ENCODE measurements at regions of chr19 and their contacts with region 1.

Region 1: DNA sequence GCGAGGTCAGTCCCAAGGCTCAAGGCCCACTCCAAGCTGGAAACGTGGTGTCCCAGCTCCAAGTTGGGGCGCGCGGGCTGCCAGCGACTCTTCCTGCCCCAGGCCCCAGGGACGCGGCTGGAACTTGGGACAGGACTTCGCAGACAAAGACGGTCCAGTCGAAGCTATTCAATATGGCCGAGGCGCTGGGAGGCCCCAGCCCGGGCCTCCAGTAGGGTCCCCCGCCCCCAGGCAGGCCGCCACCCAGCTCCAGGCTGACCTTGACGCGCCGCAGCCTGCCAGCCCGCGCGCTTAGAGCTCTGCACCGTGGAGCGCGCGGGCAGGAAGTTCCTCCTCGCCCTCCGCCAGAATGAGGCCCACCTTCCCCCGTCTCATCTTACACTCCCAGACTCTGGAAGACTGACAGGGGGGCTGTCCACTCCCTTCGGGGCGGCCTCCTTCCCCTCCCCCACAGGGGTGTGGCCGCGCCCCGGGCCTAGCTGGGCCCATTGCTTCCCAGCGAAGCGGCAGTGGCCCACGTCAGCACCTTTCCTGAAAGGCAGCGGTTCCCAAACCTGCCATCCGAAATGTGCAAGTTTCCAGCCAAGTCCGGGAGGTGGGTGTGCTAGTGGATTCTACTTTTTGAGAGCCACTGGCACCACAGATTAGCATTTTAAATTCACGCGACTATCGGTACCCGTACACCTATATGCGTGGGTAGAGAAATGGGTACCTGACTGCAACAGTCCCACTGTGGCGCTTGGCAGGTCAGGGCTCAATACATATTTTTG is at the start of gene CCDC8:
- DNase-seq: peak; percentile 86 to 91
- H3K4me3 ChIP-seq: peak within 1 kb of the TSS; percentile 57 to 88 (median 74)
- H3K27ac ChIP-seq: peak within 1 kb of the TSS; percentile 13; the same call in 1 of the 2 replicates
- H3K4me1 ChIP-seq: peaks cover 3 to 13% (median 10%) of the 10 kb centered on the region in 4 experiments
- H3K27me3 ChIP-seq: peaks cover 0 to 16% (median 7%) of the 10 kb centered on the region in 4 experiments; a peak in 4 of 7 replicates
- CTCF ChIP-seq: no peak
- EP300 ChIP-seq: no peak
- POLR2A ChIP-seq: peak in 1 of 2 experiments; percentile 73; a peak in 2 of 3 replicates
- RAD21 ChIP-seq: no peak
- total RNA-seq, gene CCDC8: 13.6 and 15.1 TPM in 2 replicates

Region 2: DNA sequence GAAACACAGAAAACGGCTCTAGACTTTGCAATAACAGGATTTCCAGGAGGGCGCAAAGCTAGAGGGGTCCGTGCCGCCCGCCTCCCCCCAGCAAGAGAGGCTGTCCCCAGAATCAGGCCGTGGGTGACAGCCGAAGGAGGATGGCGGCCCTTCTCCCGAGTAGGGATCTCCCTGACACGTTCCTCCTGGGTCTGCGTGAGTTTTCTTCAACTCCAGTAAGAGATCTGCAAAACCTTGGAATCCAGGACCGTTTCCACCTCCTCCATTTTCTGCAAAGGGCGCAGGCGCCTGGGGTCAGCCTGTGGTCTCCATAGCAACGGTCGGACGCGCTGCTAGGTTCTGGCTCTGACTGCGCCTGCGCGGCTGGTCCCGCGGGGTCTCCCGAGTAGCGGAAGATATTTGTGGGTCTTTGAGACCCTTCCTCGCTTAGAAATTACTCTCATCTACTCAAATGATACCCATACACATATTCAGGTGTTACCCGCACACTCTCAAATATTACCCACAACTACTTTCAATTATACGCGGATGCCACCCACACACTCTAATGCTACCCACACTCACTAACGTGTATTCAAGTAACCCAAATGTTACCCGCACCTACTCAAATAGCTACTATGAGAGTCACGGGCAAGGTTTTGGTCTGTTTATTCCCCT is 13.2 kb after region 1 on chr19:
- CTCF ChIA-PET with region 1: interaction called, 10 read pairs
- POLR2A ChIA-PET with region 1: interaction called, 13 read pairs
- DNase-seq: peak in 1 of 2 experiments; percentile 91
- H3K4me3 ChIP-seq: peak overlapping the region; percentile 69 to 84 (median 78)
- H3K27ac ChIP-seq: no peak overlapping the region
- H3K4me1 ChIP-seq: peaks cover 3 to 6% (median 5%) of the 10 kb centered on the region in 4 experiments; a peak in 6 of 7 replicates
- H3K27me3 ChIP-seq: peaks cover 0 to 20% (median 15%) of the 10 kb centered on the region in 4 experiments; a peak in 5 of 7 replicates
- CTCF ChIP-seq: no peak
- EP300 ChIP-seq: no peak
- POLR2A ChIP-seq: no peak
- RAD21 ChIP-seq: no peak